Activated CD8-positive, alpha-beta memory T cell treated with anti-CD3 and anti-CD28 coated beads, Interleukin-2, amount 10 ng/mL, durations not matched to agents 7 days and 5 days (primary cell): ENCODE measurements at regions of chr6 and their contacts with region 1.

Region 1: DNA sequence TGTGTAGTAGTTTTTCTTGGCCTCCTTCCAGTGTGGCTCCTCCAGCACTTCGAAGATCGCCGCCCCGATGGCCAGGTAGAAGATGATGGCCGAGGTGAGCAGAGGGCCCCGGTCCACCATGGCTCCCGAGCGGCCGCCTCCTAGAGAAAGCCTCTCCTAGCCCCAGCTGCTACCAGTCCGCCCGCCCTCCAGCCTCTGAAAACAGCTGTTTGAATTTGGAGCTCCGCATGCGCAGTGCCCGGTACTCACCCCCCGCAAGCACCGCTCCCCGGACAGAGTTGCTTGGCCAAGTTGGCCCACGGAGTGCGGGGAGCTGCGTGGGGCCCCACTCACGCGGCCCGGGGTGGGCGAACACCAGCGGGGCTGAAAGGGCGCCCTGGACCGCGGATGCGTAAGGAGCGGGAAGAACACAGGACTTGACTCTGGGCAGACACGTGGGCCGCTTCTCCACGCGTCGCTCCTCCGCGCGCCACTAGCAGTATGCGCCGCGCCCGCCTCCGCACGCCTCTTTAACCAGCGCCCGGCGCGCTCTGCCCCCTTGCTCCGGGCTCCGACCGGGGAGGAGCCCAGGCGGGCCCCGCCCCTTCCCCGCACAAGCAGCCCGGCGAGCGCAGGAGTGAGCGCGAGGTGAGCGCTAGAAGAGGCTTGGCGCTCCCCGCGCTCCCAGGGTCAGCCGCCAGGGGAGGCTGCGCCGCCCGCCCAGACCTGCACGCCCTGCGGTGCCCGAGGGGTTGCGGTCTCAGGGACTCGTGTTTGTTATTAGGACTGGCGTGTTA is at the start of gene KCNK5:
- DNase-seq: peak; percentile 93
- ATAC-seq: peak; percentile 92
- H3K4me3 Mint-ChIP-seq: peak within 1 kb of the TSS; percentile 85
- H3K27ac Mint-ChIP-seq: peak within 1 kb of the TSS; percentile 98
- H3K4me1 Mint-ChIP-seq: peaks cover 40% of the 10 kb centered on the region
- H3K27me3 Mint-ChIP-seq: no peaks in the 10 kb centered on the region
- total RNA-seq, gene KCNK5: 19.1 to 30.8 TPM

Region 2: DNA sequence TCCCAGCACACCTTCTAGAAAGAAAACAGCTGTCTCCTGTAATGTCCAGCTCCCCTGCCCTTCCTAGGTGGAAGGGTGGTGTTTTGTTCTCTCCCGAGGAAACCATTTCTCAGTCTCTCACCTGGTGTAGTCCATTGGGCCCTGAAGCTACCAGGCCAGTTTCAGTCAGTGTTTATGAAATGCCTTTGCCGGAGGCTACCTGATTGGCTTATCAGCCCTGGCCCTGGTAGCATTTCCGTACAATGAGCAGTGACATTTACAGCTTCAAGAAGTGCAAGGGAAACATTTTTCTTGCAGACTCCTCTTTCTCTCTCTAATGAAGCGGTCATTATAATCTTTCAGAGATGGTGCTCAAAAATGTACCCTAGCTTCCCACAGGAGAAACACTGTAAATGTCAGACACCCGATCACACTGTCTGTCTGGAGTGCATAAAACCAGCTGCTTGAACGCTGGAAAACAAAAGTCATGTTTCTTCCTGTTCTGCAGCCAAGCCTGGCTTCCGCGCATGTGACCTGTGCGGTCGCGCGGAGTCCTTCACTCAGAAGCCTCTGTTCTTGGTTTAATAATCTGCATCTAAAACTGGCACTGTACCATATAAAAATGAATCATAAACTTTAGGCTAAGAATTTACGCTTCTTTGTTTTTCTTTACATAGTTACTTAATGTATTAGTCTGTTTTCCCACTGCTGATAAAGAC is 85.8 kb before region 1 on chr6:
- CTCF ChIA-PET with region 1: no interaction called
- DNase-seq: no peak
- ATAC-seq: no peak
- H3K4me3 Mint-ChIP-seq: no peak overlapping the region
- H3K27ac Mint-ChIP-seq: no peak overlapping the region
- H3K4me1 Mint-ChIP-seq: peaks cover 7% of the 10 kb centered on the region
- H3K27me3 Mint-ChIP-seq: peaks cover 15% of the 10 kb centered on the region

Region 3: DNA sequence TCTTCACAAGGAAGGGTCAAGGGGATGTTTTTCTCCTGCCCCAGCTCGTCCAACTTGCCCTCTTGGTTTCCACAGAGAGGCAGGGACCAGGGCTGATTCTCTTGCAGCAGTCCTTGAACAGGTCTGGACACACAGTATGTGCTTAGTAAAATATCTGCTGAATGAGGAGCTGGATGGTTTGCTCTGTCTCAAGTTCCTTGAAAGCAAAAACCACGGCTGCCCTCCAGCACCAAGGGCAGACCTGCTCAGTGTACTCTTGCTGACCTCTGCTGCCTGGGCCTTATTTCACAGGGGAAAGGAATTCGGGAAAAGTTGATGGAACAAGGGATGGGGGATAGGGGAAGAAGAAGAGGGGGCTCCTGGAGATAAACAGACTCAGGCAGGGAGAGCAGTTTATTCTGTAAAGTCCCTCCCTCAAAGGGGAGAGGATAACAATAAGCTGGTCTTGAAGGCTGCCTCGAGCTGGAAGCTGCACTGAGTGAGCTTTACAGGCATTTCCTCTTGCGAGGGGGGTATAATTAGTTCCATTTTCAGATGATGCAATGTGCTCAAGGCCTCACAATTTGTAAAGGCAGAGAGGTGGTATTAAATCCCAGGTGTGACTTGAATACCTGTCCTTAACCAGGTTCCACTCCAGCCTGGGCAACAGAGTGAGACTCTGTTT is 10.2 kb before region 1 on chr6:
- CTCF ChIA-PET with region 1: interaction called, 19 read pairs
- DNase-seq: peak; percentile 53
- ATAC-seq: peak; percentile 54
- H3K4me3 Mint-ChIP-seq: peak overlapping the region; percentile 30
- H3K27ac Mint-ChIP-seq: peak overlapping the region; percentile 94
- H3K4me1 Mint-ChIP-seq: peaks cover 95% of the 10 kb centered on the region
- H3K27me3 Mint-ChIP-seq: no peaks in the 10 kb centered on the region